ENCODE measurements at regions of chr6 and their contacts with region 1.

Region 1: GRCh38 chr6:116287689-116288282 is 8.1 kb upstream of the TSPYL1 start:
- DNase-seq: peak in 2 of 5 donors; percentile 36 to 48
- H3K4me3 ChIP-seq: no peak overlapping the region
- H3K4me3 Mint-ChIP-seq: no peak overlapping the region
- H3K27ac ChIP-seq: no peak overlapping the region
- H3K27ac Mint-ChIP-seq: no peak overlapping the region
- H3K4me1 ChIP-seq: no peaks in the 10 kb centered on the region
- H3K4me1 Mint-ChIP-seq: no peaks in the 10 kb centered on the region
- H3K27me3 ChIP-seq: no peaks in the 10 kb centered on the region
- H3K27me3 Mint-ChIP-seq: no peaks in the 10 kb centered on the region

Region 2: DNA sequence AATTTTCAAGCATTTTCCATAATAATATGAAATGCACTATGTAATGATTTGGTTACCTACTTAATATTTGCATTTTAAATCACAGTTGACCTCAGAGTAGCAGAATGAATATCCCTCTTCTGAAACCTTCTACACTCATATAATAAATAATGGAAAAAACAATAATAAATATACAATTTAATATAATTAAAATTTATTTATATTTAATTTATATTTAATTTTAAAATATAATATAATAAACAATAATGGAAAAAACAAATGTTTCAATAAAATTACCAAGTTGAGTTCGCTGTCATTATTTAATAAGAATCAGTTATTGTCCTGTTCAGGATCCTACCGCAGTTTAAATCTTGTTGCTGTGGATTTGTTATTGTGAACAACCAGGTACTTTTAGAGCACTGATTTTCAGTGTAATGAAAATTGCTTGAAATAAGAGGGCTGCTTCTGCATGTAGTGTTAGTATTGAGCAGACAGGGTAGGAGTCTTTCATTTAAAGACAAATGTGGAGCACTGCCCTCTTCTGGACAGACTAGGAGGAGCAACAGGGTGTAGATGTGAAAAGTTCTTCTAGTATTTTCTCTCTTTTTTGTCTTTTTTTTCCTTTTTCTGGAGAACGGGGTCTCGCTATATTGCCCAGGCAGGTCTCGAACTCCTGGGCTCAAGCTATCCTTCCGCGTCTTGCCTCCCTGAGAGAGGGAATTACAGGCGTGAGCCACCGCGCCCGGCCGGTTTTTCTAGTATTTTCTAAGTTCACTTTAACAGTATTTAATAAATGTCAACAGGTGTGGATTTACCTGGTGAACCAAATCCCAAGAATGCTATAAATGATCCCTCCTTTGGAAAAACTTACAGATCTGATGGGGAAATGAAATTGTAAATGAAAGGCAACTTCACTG is 244.1 kb after region 1 on chr6:
- CTCF ChIA-PET with region 1: interaction called, 45 read pairs
- POLR2A ChIA-PET with region 1: no interaction called
- DNase-seq: peak; percentile 24 to 72 (median 56)
- H3K4me3 ChIP-seq: no peak overlapping the region
- H3K4me3 Mint-ChIP-seq: no peak overlapping the region
- H3K27ac ChIP-seq: no peak overlapping the region
- H3K27ac Mint-ChIP-seq: no peak overlapping the region
- H3K4me1 ChIP-seq: no peaks in the 10 kb centered on the region
- H3K4me1 Mint-ChIP-seq: peaks cover 0 to 3% (median 0%) of the 10 kb centered on the region in 3 donors
- H3K27me3 ChIP-seq: peaks cover 9% of the 10 kb centered on the region
- H3K27me3 Mint-ChIP-seq: peaks cover 14 to 46% of the 10 kb centered on the region in 2 donors

Measured in CD8-positive, alpha-beta memory T cell (primary cell).